Heart right ventricle (tissue), 16 donors: ENCODE measurements at regions of chr6 and their contacts with region 1.

Region 1: DNA sequence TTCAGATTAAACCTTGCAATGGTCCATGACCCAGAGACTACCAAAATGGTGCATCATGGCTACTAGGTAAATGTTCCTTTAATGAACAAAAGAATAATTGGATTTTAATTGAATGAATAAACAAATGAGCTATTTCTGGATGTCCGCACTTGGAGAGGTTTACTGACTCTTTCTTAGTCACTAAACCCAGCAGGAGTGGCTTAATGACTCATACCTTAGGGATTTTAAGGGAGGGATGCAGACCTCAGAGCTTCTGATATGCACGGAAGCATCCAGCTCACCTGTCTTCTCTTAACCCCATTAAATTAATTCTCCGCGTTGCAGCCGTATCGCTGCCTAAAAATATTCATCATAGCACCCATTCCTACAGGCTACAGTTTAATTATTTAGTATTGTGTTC is 970.0 kb upstream of the SLC35B3 start:
- DNase-seq: no peak
- ATAC-seq: no peak
- H3K4me3 ChIP-seq: no peak overlapping the region
- H3K27ac ChIP-seq: no peak overlapping the region
- H3K4me1 ChIP-seq: no peaks in the 10 kb centered on the region
- H3K27me3 ChIP-seq: no peaks in the 10 kb centered on the region
- CTCF ChIP-seq: no peak

Region 2: GRCh38 chr6:9250852-9251251 is 154.5 kb before region 1 on chr6:
- intact Hi-C with region 1: loop called in 6 of 10 experiments (anchors 5 to 10 kb)
- DNase-seq: peak in 1 of 2 donors; percentile 11
- ATAC-seq: peak in 1 of 8 donors; percentile 35
- H3K4me3 ChIP-seq: no peak overlapping the region
- H3K27ac ChIP-seq: no peak overlapping the region
- H3K4me1 ChIP-seq: no peaks in the 10 kb centered on the region
- H3K27me3 ChIP-seq: no peaks in the 10 kb centered on the region
- CTCF ChIP-seq: peak in 8 of 9 donors; percentile 19 to 54 (median 50)